Naive thymus-derived CD4-positive, alpha-beta T cell (primary cell): ENCODE measurements at regions of chr10 and their contacts with region 1.

Region 1: GRCh38 chr10:75099952-75100763 is 11.3 kb upstream of the SAMD8 start:
- DNase-seq: peak; percentile 55 to 88 (median 70)
- ATAC-seq: peak; percentile 95
- H3K4me3 ChIP-seq: no peak overlapping the region
- H3K4me3 Mint-ChIP-seq: no peak overlapping the region
- H3K27ac ChIP-seq: no peak overlapping the region
- H3K27ac Mint-ChIP-seq: no peak overlapping the region
- H3K4me1 ChIP-seq: peaks cover 0 to 3% of the 10 kb centered on the region in 2 donors
- H3K4me1 Mint-ChIP-seq: peaks cover 0 to 7% (median 0%) of the 10 kb centered on the region in 7 donors
- H3K27me3 ChIP-seq: no peaks in the 10 kb centered on the region
- H3K27me3 Mint-ChIP-seq: no peaks in the 10 kb centered on the region

Region 2: GRCh38 chr10:74244097-74244685 is 856.0 kb before region 1 on chr10:
- CTCF ChIA-PET with region 1: interaction called, 17 read pairs
- POLR2A ChIA-PET with region 1: interaction called, 3 read pairs
- intact Hi-C with region 1: loop called (anchors 1 to 2 kb)
- DNase-seq: peak in 5 of 9 donors; percentile 5 to 45 (median 34)
- ATAC-seq: no peak
- H3K4me3 ChIP-seq: no peak overlapping the region
- H3K4me3 Mint-ChIP-seq: no peak overlapping the region
- H3K27ac ChIP-seq: no peak overlapping the region
- H3K27ac Mint-ChIP-seq: no peak overlapping the region
- H3K4me1 ChIP-seq: no peaks in the 10 kb centered on the region
- H3K4me1 Mint-ChIP-seq: peaks cover 0 to 2% (median 0%) of the 10 kb centered on the region in 7 donors
- H3K27me3 ChIP-seq: no peaks in the 10 kb centered on the region
- H3K27me3 Mint-ChIP-seq: no peaks in the 10 kb centered on the region

Region 3: GRCh38 chr10:74419958-74420375 is 680.2 kb before region 1 on chr10:
- CTCF ChIA-PET with region 1: no interaction called
- POLR2A ChIA-PET with region 1: no interaction called
- intact Hi-C with region 1: loop called (anchors 1 to 10 kb)
- DNase-seq: peak in 7 of 9 donors; percentile 15 to 53 (median 48)
- ATAC-seq: peak; percentile 63
- H3K4me3 ChIP-seq: no peak overlapping the region
- H3K4me3 Mint-ChIP-seq: no peak overlapping the region
- H3K27ac ChIP-seq: no peak overlapping the region
- H3K27ac Mint-ChIP-seq: peak overlapping the region in 1 of 9 donors; percentile 57
- H3K4me1 ChIP-seq: no peaks in the 10 kb centered on the region
- H3K4me1 Mint-ChIP-seq: peaks cover 5 to 12% (median 7%) of the 10 kb centered on the region in 7 donors
- H3K27me3 ChIP-seq: no peaks in the 10 kb centered on the region
- H3K27me3 Mint-ChIP-seq: no peaks in the 10 kb centered on the region

Region 4: GRCh38 chr10:74738985-74739567 is 361.1 kb before region 1 on chr10:
- CTCF ChIA-PET with region 1: no interaction called
- POLR2A ChIA-PET with region 1: no interaction called
- intact Hi-C with region 1: loop called (anchors 1 to 5 kb)
- DNase-seq: peak in 7 of 9 donors; percentile 4 to 40 (median 17)
- ATAC-seq: peak; percentile 73
- H3K4me3 ChIP-seq: no peak overlapping the region
- H3K4me3 Mint-ChIP-seq: peak overlapping the region in 9 of 10 donors; percentile 17 to 56 (median 34)
- H3K27ac ChIP-seq: no peak overlapping the region
- H3K27ac Mint-ChIP-seq: peak overlapping the region; percentile 44 to 87 (median 58)
- H3K4me1 ChIP-seq: peaks cover 7 to 15% of the 10 kb centered on the region in 2 donors
- H3K4me1 Mint-ChIP-seq: peaks cover 15 to 26% (median 17%) of the 10 kb centered on the region in 7 donors
- H3K27me3 ChIP-seq: no peaks in the 10 kb centered on the region
- H3K27me3 Mint-ChIP-seq: no peaks in the 10 kb centered on the region

Region 5: DNA sequence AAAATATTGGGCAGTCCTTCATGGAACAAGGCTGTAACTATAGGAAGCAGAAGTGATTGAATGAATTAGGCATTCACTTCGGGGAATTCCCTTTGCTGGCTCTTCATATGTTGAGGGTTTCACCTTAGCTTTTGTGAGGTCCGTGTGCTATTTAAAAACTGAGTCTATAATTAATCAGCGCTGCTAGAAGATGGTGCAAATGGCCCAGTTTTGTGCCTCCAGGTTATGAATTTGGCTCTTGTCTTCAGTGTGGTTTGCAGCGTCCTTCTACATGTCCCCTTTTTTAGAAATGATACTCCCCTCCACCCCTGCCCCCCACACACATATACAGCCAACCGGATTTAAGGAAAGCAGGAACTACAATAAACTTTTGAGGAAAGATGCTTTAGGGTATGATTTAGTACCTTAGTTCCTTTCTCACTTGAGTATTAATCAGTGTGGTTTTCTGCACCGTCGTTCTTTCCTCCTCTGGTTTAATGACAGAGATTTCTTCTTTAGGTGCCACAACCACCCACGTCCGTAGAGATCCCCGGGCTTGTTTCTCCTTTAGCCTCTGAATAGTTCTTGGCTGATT is 99.3 kb before region 1 on chr10:
- CTCF ChIA-PET with region 1: no interaction called
- POLR2A ChIA-PET with region 1: no interaction called
- intact Hi-C with region 1: no loop called
- DNase-seq: no peak
- ATAC-seq: no peak
- H3K4me3 ChIP-seq: no peak overlapping the region
- H3K4me3 Mint-ChIP-seq: no peak overlapping the region
- H3K27ac ChIP-seq: no peak overlapping the region
- H3K27ac Mint-ChIP-seq: peak overlapping the region in 2 of 9 donors; percentile 8 to 43
- H3K4me1 ChIP-seq: no peaks in the 10 kb centered on the region
- H3K4me1 Mint-ChIP-seq: peaks cover 0 to 20% (median 3%) of the 10 kb centered on the region in 7 donors
- H3K27me3 ChIP-seq: no peaks in the 10 kb centered on the region
- H3K27me3 Mint-ChIP-seq: no peaks in the 10 kb centered on the region